ENCODE measurements at regions of chr11 and their contacts with region 1.

Region 1: DNA sequence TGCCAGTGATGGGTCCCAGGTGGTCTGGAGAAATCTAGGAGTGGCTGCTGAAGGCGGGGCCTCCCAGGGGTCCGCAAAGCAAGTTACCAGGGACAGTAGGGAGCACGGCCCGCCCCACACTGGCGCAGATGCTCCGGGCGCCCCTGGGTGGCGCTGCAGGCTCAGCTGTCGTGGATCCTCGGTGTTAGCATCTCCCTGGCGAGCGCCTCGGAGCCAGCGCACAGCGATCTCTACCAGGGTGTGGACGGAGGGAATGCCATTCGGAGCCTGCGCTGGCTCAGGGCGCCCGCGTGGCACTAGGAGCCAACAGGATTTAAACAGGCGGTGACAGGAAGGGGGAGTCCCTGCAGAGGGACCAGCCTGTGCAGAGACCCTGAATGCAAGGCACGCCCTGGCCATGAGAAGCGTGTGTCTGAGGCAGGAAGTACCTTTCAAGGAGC is 20.2 kb downstream of the FADS3 start:
- DNase-seq: peak; percentile 68
- H3K4me3 ChIP-seq: no peak overlapping the region
- H3K27ac ChIP-seq: no peak overlapping the region
- H3K4me1 ChIP-seq: peaks cover 10% of the 10 kb centered on the region
- H3K27me3 ChIP-seq: no peaks in the 10 kb centered on the region
- CTCF ChIP-seq: peak; percentile 82 to 95

Region 2: DNA sequence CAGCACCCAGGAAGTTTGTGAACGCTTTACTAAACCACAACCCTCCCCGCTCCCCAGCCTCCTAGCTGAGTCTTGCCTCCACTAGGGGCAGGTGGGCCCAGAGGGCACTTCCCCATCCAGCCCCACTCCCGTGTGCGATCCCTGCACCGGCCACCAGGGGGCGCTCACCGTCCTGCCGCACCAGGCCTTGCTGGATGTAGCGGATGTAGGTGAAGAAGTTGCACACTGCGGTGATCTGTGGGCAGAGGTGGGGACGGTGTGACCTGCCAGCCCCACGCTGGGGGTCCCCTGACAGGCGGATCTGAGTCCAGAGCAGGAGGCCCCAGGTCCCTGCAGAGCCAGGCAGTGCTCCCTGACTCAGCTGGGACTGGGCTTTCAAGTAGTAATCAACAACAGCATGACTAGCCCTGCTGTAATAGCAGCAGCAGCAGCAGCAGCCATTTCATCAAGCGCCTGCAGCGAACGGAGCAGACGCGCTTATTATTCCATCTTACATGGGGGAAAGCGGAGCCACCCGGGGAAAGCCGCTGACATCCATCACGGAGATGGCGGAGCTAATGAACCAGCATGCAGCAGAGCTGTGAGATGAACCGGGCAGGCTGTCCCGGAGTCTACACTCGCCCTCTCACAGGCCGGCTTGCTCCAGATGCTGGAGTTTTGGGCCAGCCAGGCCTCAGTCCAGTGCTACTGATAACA is 28.1 kb after region 1 on chr11:
- CTCF ChIA-PET with region 1: no interaction called
- dilution Hi-C with region 1: no loop called
- in situ Hi-C with region 1: no loop called
- intact Hi-C with region 1: loop called (anchors 1 kb)
- DNase-seq: peak; percentile 52
- H3K4me3 ChIP-seq: no peak overlapping the region
- H3K27ac ChIP-seq: no peak overlapping the region
- H3K4me1 ChIP-seq: peaks cover 19% of the 10 kb centered on the region
- H3K27me3 ChIP-seq: no peaks in the 10 kb centered on the region
- CTCF ChIP-seq: peak; percentile 96 to 99

Region 3: DNA sequence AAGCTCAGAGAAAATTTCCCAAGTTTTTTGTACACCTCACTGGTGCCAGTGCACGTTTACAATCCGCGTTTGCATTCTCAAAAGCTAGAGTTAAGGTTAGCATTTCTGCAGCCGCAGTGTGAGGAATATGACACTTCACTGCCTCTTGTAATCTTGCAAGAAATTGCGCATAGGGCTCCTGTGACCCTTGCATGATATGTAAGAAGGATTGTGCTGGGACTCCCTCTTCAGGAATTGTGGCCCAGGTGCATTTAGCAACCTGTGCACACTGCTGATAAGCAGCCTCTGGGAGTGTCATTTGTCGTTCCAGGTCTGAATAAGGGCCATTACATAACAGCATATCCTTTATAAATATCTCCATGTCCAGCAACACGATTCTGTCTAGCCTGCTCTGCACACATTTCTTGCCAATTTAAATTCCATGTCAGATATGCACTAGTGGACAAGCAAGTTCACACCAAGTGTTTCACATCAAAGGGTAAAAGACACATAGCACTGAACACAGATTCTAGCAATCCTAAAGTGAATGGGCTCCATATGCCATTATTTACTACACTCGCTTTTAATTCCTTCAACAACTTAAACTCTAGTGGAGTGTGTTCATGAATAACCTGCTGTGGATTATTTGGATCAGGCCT is 183.4 kb after region 1 on chr11:
- CTCF ChIA-PET with region 1: no interaction called
- dilution Hi-C with region 1: no loop called
- in situ Hi-C with region 1: no loop called
- intact Hi-C with region 1: loop called (anchors 1 kb)
- DNase-seq: peak; percentile 42
- H3K4me3 ChIP-seq: no peak overlapping the region
- H3K27ac ChIP-seq: no peak overlapping the region
- H3K4me1 ChIP-seq: peaks cover 8% of the 10 kb centered on the region
- H3K27me3 ChIP-seq: no peaks in the 10 kb centered on the region
- CTCF ChIP-seq: peak; percentile 74 to 87

Region 4: GRCh38 chr11:62081378-62082291 is 210.5 kb after region 1 on chr11:
- CTCF ChIA-PET with region 1: interaction called, 6 read pairs
- dilution Hi-C with region 1: no loop called
- in situ Hi-C with region 1: no loop called
- intact Hi-C with region 1: loop called (anchors 1 kb)
- DNase-seq: peak; percentile 57
- H3K4me3 ChIP-seq: no peak overlapping the region
- H3K27ac ChIP-seq: no peak overlapping the region
- H3K4me1 ChIP-seq: peaks cover 6% of the 10 kb centered on the region
- H3K27me3 ChIP-seq: no peaks in the 10 kb centered on the region
- CTCF ChIP-seq: peak; percentile 82 to 91

Measured in mammary epithelial cell (primary cell).